Mammary epithelial cell (primary cell): ENCODE measurements at regions of chr12 and their contacts with region 1.

Region 1: GRCh38 chr12:52372216-52373154 is 5.2 kb upstream of the KRT85 start:
- DNase-seq: peak; percentile 81
- H3K4me3 ChIP-seq: no peak overlapping the region
- H3K27ac ChIP-seq: no peak overlapping the region
- H3K4me1 ChIP-seq: peaks cover 3% of the 10 kb centered on the region
- H3K27me3 ChIP-seq: no peaks in the 10 kb centered on the region
- CTCF ChIP-seq: peak; percentile 86 to 93

Region 2: DNA sequence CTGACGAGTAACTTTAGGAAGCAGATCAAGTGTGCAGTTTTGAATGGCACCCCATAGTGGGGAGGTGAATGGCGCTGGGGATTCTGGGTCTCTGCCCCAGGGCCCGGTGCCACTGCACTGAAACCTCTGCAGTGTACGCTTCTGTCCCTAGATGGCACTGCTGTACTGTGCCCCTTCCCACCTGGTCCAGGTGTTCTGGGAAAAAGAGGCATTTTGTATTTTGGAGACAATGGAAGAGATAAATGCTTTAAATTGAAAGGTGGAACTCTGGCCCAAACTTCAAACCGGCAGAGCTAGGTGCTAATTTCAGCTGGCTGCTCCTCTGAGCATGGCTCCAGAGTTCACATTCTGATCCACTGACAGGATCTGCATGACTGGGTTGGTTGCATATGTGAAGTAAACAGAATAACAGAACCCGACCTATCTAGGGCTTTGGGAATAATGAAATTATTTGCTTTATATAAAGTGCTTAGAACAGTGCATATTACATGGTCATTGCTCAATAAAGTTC is 232.9 kb before region 1 on chr12:
- CTCF ChIA-PET with region 1: no interaction called
- dilution Hi-C with region 1: loop called (anchors 10 kb)
- in situ Hi-C with region 1: no loop called
- intact Hi-C with region 1: loop called (anchors 1 kb)
- DNase-seq: peak; percentile 53
- H3K4me3 ChIP-seq: no peak overlapping the region
- H3K27ac ChIP-seq: no peak overlapping the region
- H3K4me1 ChIP-seq: peaks cover 15% of the 10 kb centered on the region
- H3K27me3 ChIP-seq: no peaks in the 10 kb centered on the region
- CTCF ChIP-seq: peak; percentile 98

Region 3: DNA sequence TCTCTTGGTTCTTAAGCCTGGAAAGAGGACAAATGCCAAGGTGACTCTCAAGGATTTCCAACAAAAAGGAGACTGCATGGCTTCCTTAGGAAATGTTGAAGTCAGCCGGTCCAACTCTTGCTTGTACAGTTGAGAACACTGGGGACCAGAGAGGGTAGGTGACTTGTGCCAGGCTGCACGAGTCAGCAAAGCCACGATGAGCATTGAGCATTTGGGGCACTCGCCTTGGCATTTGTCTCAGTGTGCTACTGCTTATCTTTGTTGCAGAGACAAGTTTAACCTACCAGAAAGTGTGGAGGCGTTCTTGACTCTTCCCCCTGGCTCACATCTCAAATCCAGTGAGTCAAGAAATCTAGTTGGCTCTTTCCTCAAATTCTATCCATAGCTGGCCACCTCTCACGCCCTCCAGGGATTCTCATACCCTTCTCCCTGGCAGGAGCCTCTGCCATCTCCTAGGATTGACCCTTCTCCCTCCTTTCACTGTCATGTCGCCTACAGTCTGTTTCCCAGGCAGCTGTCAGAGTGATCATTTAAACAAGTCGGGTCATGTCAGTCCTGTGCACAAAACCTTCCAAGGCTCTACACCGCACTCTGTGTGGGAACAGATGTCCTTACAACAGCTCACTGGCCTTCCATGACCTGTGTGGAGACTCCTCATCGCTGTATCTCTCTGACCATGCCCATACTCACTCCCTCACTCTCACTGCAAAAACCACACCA is 34.1 kb before region 1 on chr12:
- CTCF ChIA-PET with region 1: interaction called, 10 read pairs
- dilution Hi-C with region 1: no loop called
- in situ Hi-C with region 1: no loop called
- intact Hi-C with region 1: no loop called
- DNase-seq: peak; percentile 92
- H3K4me3 ChIP-seq: no peak overlapping the region
- H3K27ac ChIP-seq: peak overlapping the region; percentile 12
- H3K4me1 ChIP-seq: peaks cover 20% of the 10 kb centered on the region
- H3K27me3 ChIP-seq: no peaks in the 10 kb centered on the region
- CTCF ChIP-seq: peak in 1 of 2 donors; percentile 8

Region 4: GRCh38 chr12:52495389-52495788 is 122.9 kb after region 1 on chr12:
- CTCF ChIA-PET with region 1: no interaction called
- dilution Hi-C with region 1: no loop called
- in situ Hi-C with region 1: no loop called
- intact Hi-C with region 1: no loop called
- DNase-seq: peak; percentile 72
- H3K4me3 ChIP-seq: no peak overlapping the region
- H3K27ac ChIP-seq: peak overlapping the region; percentile 99
- H3K4me1 ChIP-seq: peaks cover 69% of the 10 kb centered on the region
- H3K27me3 ChIP-seq: no peaks in the 10 kb centered on the region
- CTCF ChIP-seq: peak in 1 of 2 donors; percentile 31

Region 5: DNA sequence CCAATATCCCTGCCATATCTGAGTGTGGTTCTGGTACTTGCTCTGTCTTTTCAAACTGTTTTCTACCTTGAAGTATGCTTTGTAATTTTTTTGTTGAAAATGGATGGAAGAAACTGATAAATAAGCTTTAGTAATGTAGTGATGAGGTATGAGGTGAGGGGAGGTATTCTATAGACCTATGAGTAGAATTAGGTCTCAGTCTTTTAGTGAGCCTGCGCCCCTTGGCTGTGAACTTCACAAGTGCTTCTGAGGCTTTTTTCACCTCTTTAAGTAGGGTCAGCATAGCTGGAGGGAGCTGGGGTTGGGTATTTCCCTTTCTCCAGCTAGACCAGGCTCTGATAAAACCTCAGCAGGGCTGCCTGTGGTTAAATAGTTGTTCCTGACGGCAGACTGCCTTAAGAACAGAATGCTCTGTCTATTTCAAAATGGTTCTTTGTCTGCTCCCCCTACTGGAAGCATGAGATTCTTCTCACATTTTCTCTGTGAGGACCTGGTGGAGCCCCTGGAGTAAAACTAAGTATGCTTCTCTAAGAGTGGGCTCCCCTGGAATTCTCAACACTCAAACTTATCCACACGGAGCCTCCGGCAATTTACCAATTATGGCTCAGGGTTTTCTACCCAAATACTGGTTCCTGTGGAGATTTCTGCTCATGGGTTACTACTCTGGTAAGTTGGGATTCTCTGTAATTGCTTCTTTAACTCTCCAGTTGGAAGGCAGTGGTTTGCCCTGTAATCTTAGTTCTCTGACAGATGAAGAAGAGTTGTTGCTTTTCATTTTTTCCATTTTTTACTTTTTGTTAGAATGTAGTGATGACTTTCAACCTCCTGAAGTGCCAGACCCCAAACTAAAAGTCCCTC is 134.6 kb after region 1 on chr12:
- CTCF ChIA-PET with region 1: interaction called, 5 read pairs
- dilution Hi-C with region 1: no loop called
- in situ Hi-C with region 1: no loop called
- intact Hi-C with region 1: loop called (anchors 1 kb)
- DNase-seq: peak; percentile 82
- H3K4me3 ChIP-seq: no peak overlapping the region
- H3K27ac ChIP-seq: peak overlapping the region; percentile 40
- H3K4me1 ChIP-seq: peaks cover 21% of the 10 kb centered on the region
- H3K27me3 ChIP-seq: no peaks in the 10 kb centered on the region
- CTCF ChIP-seq: peak; percentile 58 to 72

Region 6: GRCh38 chr12:52515927-52516831 is 143.7 kb after region 1 on chr12:
- CTCF ChIA-PET with region 1: no interaction called
- dilution Hi-C with region 1: no loop called
- in situ Hi-C with region 1: no loop called
- intact Hi-C with region 1: loop called (anchors 1 kb)
- DNase-seq: peak; percentile 82
- H3K4me3 ChIP-seq: peak overlapping the region; percentile 66 to 94 (median 79)
- H3K27ac ChIP-seq: peak overlapping the region; percentile 82
- H3K4me1 ChIP-seq: peaks cover 30% of the 10 kb centered on the region
- H3K27me3 ChIP-seq: no peaks in the 10 kb centered on the region
- CTCF ChIP-seq: no peak

Region 7: GRCh38 chr12:52526511-52526951 is 154.0 kb after region 1 on chr12:
- CTCF ChIA-PET with region 1: no interaction called
- dilution Hi-C with region 1: no loop called
- in situ Hi-C with region 1: no loop called
- intact Hi-C with region 1: no loop called
- DNase-seq: no peak
- H3K4me3 ChIP-seq: no peak overlapping the region
- H3K27ac ChIP-seq: peak overlapping the region; percentile 99
- H3K4me1 ChIP-seq: peaks cover 51% of the 10 kb centered on the region
- H3K27me3 ChIP-seq: no peaks in the 10 kb centered on the region
- CTCF ChIP-seq: no peak

Region 8: GRCh38 chr12:52715416-52715815 is 342.9 kb after region 1 on chr12:
- CTCF ChIA-PET with region 1: no interaction called
- dilution Hi-C with region 1: no loop called
- in situ Hi-C with region 1: no loop called
- intact Hi-C with region 1: no loop called
- DNase-seq: peak; percentile 4
- H3K4me3 ChIP-seq: no peak overlapping the region
- H3K27ac ChIP-seq: no peak overlapping the region
- H3K4me1 ChIP-seq: no peaks in the 10 kb centered on the region
- H3K27me3 ChIP-seq: peaks cover 21% of the 10 kb centered on the region
- CTCF ChIP-seq: no peak

Region 9: GRCh38 chr12:52980693-52981423 is 608.4 kb after region 1 on chr12:
- CTCF ChIA-PET with region 1: no interaction called
- dilution Hi-C with region 1: loop called (anchors 25 kb)
- in situ Hi-C with region 1: loop called (anchors 25 kb)
- intact Hi-C with region 1: loop called (anchors 2 kb)
- DNase-seq: peak; percentile 80
- H3K4me3 ChIP-seq: no peak overlapping the region
- H3K27ac ChIP-seq: no peak overlapping the region
- H3K4me1 ChIP-seq: no peaks in the 10 kb centered on the region
- H3K27me3 ChIP-seq: no peaks in the 10 kb centered on the region
- CTCF ChIP-seq: peak; percentile 99